ENCODE measurements at regions of chr15 and their contacts with region 1.

Region 1: GRCh38 chr15:67914537-67915460 is 75.0 kb upstream of the RNU6-1 start:
- DNase-seq: peak; percentile 60 to 93
- ATAC-seq: peak; percentile 80 to 81
- H3K4me3 ChIP-seq: peak overlapping the region; percentile 17; the same call in 2 of the 3 replicates
- H3K27ac ChIP-seq: peak overlapping the region; percentile 86 to 88
- H3K4me1 ChIP-seq: peaks cover 45% of the 10 kb centered on the region
- CTCF ChIP-seq: no peak
- EP300 ChIP-seq: no peak
- POLR2A ChIP-seq: no peak
- RAD21 ChIP-seq: peak in 1 of 2 experiments; percentile 44; a peak in 2 of 5 replicates

Region 2: DNA sequence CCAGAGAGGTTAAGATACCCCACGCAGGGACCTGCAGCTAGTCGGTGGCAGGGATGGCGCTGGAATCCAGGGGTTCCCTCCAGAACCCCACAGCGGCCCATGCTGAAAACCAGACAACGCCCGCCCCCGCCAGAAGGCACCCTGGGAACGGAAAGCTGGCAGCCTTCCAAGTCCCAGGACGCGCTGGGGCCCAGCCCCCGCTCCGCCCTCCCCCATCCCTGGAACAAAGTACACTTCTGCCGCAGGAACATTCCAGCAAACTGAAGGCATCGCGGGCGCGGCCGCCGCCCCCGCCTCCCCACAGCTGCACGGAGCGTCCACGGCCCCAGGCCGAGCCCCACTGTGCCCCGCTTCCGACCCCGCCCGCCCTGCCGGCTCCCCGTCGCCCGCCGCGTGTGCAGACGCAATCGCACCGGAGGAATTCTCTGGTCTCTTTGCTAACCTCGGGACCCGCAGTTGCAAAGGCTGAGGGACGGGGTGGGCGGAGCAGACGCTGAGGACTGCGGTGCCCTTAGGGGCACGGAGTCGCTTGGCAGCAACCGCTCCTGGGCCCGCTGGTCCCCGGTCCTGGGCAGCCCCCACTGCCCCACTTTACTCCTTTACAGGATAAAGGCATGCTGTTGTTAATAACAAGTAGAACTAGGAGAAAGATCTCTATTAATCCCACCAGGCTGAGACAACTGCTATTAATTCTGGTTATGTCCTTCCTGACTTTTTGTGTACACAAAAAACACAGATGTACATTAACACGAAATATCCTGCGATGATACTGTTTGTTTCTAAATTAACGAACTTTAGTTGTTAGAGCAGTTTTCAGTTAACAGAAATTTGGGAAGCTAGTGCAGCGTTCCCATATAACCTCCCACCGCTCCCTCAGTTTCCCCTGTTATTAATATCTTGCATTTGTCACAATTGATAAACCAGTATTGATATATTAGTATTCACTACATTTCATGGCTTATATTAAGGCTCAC is 30.0 kb before region 1 on chr15:
- CTCF ChIA-PET with region 1: interaction called, 4 read pairs
- POLR2A ChIA-PET with region 1: interaction called, 26 read pairs
- DNase-seq: peak; percentile 88 to 91
- ATAC-seq: peak; percentile 91 to 92
- H3K4me3 ChIP-seq: peak overlapping the region; percentile 40
- H3K27ac ChIP-seq: peak overlapping the region; percentile 84 to 93
- H3K4me1 ChIP-seq: peaks cover 57% of the 10 kb centered on the region
- CTCF ChIP-seq: no peak; the same call in 2 of the 3 replicates
- EP300 ChIP-seq: peak; percentile 49 to 77; a peak in 3 of 5 replicates
- POLR2A ChIP-seq: peak; percentile 41
- RAD21 ChIP-seq: peak; percentile 13 to 77; a peak in 3 of 5 replicates

Region 3: GRCh38 chr15:67945951-67946700 is 31.3 kb after region 1 on chr15:
- CTCF ChIA-PET with region 1: interaction called, 3 read pairs
- POLR2A ChIA-PET with region 1: interaction called, 12 read pairs
- DNase-seq: peak in 1 of 2 experiments; percentile 89
- ATAC-seq: peak; percentile 77 to 92
- H3K4me3 ChIP-seq: no peak overlapping the region
- H3K27ac ChIP-seq: peak overlapping the region; percentile 67 to 81
- H3K4me1 ChIP-seq: peaks cover 36% of the 10 kb centered on the region
- CTCF ChIP-seq: no peak
- EP300 ChIP-seq: peak in 1 of 2 experiments; percentile 37; a peak in 2 of 5 replicates
- POLR2A ChIP-seq: no peak
- RAD21 ChIP-seq: no peak; a peak in 1 of 5 replicates

Region 4: DNA sequence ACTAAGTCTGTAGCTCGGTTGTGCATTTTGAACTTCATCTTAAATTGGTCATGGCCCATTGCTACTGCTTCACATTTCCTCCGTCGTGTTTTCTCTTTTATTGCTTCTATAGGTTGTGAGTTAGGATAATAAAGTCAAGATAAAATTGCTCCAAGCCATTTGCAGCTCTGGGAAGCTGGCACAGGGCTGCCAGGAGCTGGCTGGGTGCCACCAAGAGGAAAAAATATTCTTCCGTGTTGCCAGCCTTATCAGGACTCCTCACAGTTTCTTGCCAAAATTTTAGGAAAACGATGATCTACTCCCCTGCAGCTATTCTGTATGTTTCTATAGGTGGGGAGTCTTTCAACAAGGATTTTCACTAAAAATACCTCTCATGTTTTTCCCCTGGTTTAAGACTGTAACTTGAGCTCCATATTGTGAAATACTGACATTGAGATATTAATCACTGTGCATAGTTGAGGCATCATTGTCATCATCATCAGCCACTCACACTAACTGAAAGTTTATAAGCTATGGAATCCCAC is 83.9 kb after region 1 on chr15:
- CTCF ChIA-PET with region 1: no interaction called
- POLR2A ChIA-PET with region 1: interaction called, 16 read pairs
- DNase-seq: peak; percentile 50 to 57
- ATAC-seq: peak; percentile 68 to 72
- H3K4me3 ChIP-seq: peak overlapping the region; percentile 18; the same call in 2 of the 3 replicates
- H3K27ac ChIP-seq: peak overlapping the region; percentile 71 to 76
- H3K4me1 ChIP-seq: peaks cover 30% of the 10 kb centered on the region
- CTCF ChIP-seq: no peak
- EP300 ChIP-seq: no peak
- POLR2A ChIP-seq: no peak
- RAD21 ChIP-seq: no peak

Region 5: DNA sequence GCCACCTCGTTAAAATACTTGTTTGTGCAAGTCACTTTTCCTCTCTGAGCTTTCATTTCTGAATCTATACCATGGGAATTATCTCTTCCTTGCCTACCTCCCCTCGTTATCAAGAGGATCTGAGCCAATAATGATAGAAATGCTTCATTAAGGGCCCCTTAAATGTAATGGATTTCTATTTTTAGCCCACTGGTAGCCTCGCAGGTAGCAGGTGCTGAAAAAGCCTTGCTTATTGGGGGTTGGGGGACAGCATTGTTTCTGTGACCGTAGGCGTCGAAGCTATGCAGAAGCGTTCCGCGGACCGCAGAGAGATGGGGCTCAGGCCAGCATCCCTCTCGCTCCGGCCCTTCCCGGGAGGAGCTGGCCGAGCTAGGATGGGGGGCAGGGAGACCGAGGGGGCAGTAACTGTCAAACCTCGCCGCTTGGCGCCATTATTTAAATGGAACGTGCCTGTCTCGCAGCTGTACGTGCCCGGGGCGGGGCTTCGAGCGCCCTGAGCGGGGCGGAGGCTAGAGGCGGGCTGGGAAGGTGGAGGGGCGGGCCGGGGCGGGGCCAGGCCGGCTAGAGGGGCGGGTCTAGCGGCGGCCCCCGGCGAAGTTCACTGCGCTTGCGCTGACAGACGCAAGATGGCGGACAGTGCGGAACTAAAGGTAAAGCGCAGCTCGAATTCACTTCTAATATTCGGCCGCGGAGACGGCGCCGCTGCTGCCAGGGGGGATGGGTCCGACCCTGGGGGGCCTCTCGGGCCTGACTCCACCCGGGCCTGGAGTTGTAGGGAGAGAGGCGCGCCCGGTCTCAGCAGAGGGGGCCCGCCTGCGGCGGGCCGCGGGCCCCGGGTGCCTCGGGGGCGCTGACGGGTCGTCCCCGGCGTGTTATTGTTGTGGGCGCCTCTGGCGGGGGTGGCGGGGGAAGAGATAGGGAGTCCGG is 139.2 kb after region 1 on chr15 and contains the start of gene PIAS1:
- CTCF ChIA-PET with region 1: no interaction called
- POLR2A ChIA-PET with region 1: interaction called, 29 read pairs
- DNase-seq: peak; percentile 91 to 95
- ATAC-seq: peak; percentile 92 to 95
- H3K4me3 ChIP-seq: peak within 1 kb of the TSS; percentile 90
- H3K27ac ChIP-seq: peak within 1 kb of the TSS; percentile 91 to 96
- H3K4me1 ChIP-seq: peaks cover 32% of the 10 kb centered on the region
- CTCF ChIP-seq: 0 out of 3 replicates have a peak, but pooled peaks have one; percentile 7
- EP300 ChIP-seq: no peak
- POLR2A ChIP-seq: peak; percentile 80
- RAD21 ChIP-seq: no peak; a peak in 2 of 5 replicates
- polyA plus RNA-seq, gene PIAS1: 49.5 and 53.7 TPM in 2 replicates

Region 6: DNA sequence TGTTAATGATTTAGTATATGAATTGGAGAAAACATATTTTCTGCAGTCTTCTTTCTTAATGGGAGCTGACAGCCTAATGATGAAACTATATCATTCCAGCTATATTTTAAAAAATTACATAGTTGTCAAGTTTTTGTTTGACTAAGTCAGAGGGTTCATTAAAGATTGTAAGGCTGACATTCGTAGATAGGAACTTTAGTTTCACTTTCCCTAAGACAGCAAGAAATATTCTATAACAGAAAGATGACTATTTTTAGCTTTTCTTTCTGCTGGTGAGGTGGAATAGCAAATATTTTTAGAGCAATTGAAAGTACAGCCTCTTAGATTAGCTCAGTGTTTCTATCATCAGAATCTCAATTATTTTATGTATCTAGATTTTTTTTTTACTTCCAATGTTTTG is 199.6 kb after region 1 on chr15:
- CTCF ChIA-PET with region 1: no interaction called
- POLR2A ChIA-PET with region 1: no interaction called
- DNase-seq: no peak
- ATAC-seq: no peak
- H3K4me3 ChIP-seq: peak overlapping the region; percentile 27
- H3K27ac ChIP-seq: no peak overlapping the region; a peak in 1 of 6 replicates
- H3K4me1 ChIP-seq: peaks cover 16% of the 10 kb centered on the region
- CTCF ChIP-seq: no peak
- EP300 ChIP-seq: no peak
- POLR2A ChIP-seq: no peak
- RAD21 ChIP-seq: no peak

Region 7: DNA sequence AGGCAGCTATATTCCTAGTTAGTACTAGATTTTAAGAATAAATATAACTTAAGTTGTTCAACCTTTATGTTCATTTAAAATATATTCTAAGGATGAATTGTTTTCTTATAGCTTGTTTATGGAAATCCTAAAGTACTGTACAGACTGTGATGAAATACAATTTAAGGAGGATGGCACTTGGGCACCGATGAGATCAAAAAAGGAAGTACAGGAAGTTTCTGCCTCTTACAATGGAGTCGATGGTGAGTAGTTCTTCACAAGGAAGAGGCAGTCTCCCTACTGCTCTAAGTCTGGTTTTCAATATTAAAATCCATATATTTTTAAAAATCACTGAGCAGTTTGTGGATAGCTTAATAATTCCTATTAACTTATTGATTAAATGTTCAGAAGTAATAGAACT is 260.7 kb after region 1 on chr15:
- CTCF ChIA-PET with region 1: no interaction called
- POLR2A ChIA-PET with region 1: no interaction called
- DNase-seq: no peak
- ATAC-seq: no peak
- H3K4me3 ChIP-seq: no peak overlapping the region
- H3K27ac ChIP-seq: no peak overlapping the region
- H3K4me1 ChIP-seq: no peaks in the 10 kb centered on the region
- CTCF ChIP-seq: no peak
- EP300 ChIP-seq: no peak
- POLR2A ChIP-seq: no peak
- RAD21 ChIP-seq: no peak